ENCODE measurements at regions of chr5 and their contacts with region 1.

Region 1: GRCh38 chr5:65925601-65926275 is 637 bp upstream of the ERBIN start:
- DNase-seq: peak; percentile 95
- H3K4me3 ChIP-seq: peak overlapping the region; percentile 69 to 89 (median 84)
- H3K27ac ChIP-seq: peak overlapping the region; percentile 99 to 100 (median 100)
- H3K4me1 ChIP-seq: peaks cover 20 to 51% (median 41%) of the 10 kb centered on the region in 6 donors
- H3K27me3 ChIP-seq: no peaks in the 10 kb centered on the region
- CTCF ChIP-seq: peak in 9 of 11 experiments; percentile 25 to 56 (median 41)
- POLR2A ChIP-seq: peak; percentile 64 to 82 (median 79)

Region 2: DNA sequence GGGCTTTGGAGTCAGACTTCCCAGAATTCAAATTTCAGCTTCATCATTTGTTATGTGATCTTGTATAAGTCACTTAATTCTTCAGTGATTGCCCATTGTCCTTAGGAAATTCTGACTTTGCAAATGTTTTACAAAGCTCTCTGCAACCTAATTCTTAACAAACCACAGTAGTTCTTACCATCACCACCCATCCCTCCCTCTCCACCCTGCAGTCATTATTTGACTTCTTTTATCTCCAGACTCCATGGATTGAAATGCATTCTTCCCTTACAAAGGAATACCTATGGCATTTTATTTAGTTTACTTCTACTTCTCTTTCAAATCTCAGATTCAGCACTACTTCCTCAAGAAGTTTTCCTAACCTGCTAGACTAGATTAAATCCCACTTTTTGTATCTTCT is 277.8 kb before region 1 on chr5:
- intact Hi-C with region 1: no loop called
- DNase-seq: no peak
- H3K4me3 ChIP-seq: no peak overlapping the region
- H3K27ac ChIP-seq: no peak overlapping the region
- H3K4me1 ChIP-seq: no peaks in the 10 kb centered on the region
- H3K27me3 ChIP-seq: no peaks in the 10 kb centered on the region
- CTCF ChIP-seq: no peak
- POLR2A ChIP-seq: no peak

Region 3: DNA sequence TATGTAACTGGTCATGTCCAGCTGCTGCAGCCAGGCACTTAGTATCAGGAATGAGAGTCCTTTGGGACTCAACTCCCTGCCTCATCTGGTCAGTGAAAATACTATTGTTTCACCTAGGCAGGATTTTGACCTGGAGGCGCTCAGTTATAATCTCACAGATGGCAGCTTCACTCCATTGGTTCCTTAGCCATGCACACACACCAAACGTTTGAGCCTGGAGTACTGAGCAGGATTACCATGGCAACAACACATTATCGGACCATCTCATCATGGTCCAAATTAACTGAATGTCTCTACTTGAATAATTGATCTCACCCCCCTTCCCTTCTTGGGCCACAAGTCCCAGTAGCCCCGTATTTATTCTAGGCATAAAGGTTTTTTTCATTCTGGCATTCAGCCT is 203.4 kb after region 1 on chr5:
- intact Hi-C with region 1: no loop called
- DNase-seq: no peak
- H3K4me3 ChIP-seq: no peak overlapping the region
- H3K27ac ChIP-seq: no peak overlapping the region
- H3K4me1 ChIP-seq: no peaks in the 10 kb centered on the region
- H3K27me3 ChIP-seq: no peaks in the 10 kb centered on the region
- CTCF ChIP-seq: no peak
- POLR2A ChIP-seq: no peak

Region 4: GRCh38 chr5:66144074-66144833 is 218.5 kb after region 1 on chr5 and contains the start of gene SREK1:
- intact Hi-C with region 1: loop called (anchors 10 kb)
- DNase-seq: peak; percentile 98
- H3K4me3 ChIP-seq: peak within 1 kb of the TSS; percentile 57 to 89 (median 77)
- H3K27ac ChIP-seq: peak within 1 kb of the TSS; percentile 99 to 100 (median 100)
- H3K4me1 ChIP-seq: peaks cover 27 to 54% (median 44%) of the 10 kb centered on the region in 6 donors
- H3K27me3 ChIP-seq: no peaks in the 10 kb centered on the region
- CTCF ChIP-seq: peak in 4 of 11 experiments; percentile 10 to 43 (median 24)
- POLR2A ChIP-seq: peak in 2 of 3 donors; percentile 29 to 73
- total RNA-seq, gene SREK1: 77.6 to 170 (median 102) TPM

Region 5: DNA sequence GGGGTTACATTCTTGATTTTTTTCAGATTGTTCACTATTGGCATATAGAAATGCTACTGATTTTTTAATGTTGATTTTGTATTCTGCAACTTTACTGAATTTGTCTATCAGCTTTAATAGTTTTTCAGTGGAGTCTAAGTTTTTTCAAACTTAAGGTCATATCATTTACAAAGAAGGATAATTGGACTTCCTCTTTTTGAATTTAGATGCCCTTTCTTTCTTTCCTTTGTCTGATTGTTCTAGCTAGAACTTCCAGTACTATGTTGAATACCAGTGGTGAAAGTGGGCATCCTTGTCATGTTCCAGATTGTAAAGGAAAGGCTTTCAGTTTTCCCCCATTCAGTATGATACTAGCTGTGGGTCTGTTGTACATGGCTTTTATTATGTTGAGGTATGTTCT is 267.7 kb after region 1 on chr5:
- intact Hi-C with region 1: no loop called
- DNase-seq: no peak
- H3K4me3 ChIP-seq: no peak overlapping the region
- H3K27ac ChIP-seq: no peak overlapping the region
- H3K4me1 ChIP-seq: no peaks in the 10 kb centered on the region
- H3K27me3 ChIP-seq: no peaks in the 10 kb centered on the region
- CTCF ChIP-seq: no peak
- POLR2A ChIP-seq: no peak